K562 (cell line): ENCODE measurements at regions of chr9 and their contacts with region 1.

Region 1: DNA sequence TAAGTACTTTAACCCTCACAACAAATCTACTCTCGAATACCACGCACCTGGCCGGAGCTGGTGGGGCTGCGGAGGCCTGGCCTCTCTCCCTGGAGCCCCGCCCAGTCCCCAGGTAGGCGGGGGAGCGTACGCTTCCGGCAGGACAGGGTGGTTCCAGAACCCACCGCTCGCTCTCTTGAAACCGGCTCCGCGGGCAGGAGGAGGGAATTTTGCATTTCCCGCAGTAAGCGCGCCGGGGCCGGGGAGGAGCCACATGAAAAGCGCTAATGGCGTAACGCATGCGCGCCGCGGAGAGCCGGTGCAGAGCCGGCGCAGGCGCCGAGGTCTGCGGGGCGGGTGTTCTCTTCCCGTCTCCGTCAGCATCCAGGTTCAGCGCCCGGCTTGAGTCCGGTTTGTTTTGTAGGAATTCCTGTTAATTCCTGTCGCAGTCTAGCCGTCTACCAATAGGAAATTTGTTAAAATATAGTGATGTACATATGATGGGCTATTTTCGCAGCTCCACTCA is 20.8 kb downstream of the CAVIN4 start:
- DNase-seq: peak; percentile 66 to 84 (median 74)
- ATAC-seq: peak; percentile 89
- H3K4me3 ChIP-seq: peak overlapping the region; percentile 41
- H3K27ac ChIP-seq: no peak overlapping the region
- H3K4me1 ChIP-seq: peaks cover 6% of the 10 kb centered on the region in 2 experiments; a peak in 3 of 5 replicates
- H3K27me3 ChIP-seq: no peaks in the 10 kb centered on the region
- CTCF ChIP-seq: no peak; a peak in 1 of 6 replicates
- EP300 ChIP-seq: no peak
- POLR2A ChIP-seq: peak; percentile 47; the same call in 1 of the 2 replicates
- RAD21 ChIP-seq: no peak

Region 2: GRCh38 chr9:99266255-99267023 is 1332.3 kb before region 1 on chr9:
- CTCF ChIA-PET with region 1: no interaction called
- POLR2A ChIA-PET with region 1: no interaction called
- in situ Hi-C with region 1: no loop called
- intact Hi-C with region 1: loop called (anchors 10 kb)
- DNase-seq: peak; percentile 61 to 84 (median 73)
- ATAC-seq: peak; percentile 95
- H3K4me3 ChIP-seq: no peak overlapping the region
- H3K27ac ChIP-seq: no peak overlapping the region
- H3K4me1 ChIP-seq: peaks cover 3 to 4% of the 10 kb centered on the region in 2 experiments; a peak in 3 of 5 replicates
- H3K27me3 ChIP-seq: peaks cover 4 to 10% of the 10 kb centered on the region in 2 experiments; a peak in 3 of 5 replicates
- CTCF ChIP-seq: peak; percentile 92 to 96 (median 93)
- EP300 ChIP-seq: no peak
- POLR2A ChIP-seq: no peak
- RAD21 ChIP-seq: peak; percentile 89 to 90

Region 3: DNA sequence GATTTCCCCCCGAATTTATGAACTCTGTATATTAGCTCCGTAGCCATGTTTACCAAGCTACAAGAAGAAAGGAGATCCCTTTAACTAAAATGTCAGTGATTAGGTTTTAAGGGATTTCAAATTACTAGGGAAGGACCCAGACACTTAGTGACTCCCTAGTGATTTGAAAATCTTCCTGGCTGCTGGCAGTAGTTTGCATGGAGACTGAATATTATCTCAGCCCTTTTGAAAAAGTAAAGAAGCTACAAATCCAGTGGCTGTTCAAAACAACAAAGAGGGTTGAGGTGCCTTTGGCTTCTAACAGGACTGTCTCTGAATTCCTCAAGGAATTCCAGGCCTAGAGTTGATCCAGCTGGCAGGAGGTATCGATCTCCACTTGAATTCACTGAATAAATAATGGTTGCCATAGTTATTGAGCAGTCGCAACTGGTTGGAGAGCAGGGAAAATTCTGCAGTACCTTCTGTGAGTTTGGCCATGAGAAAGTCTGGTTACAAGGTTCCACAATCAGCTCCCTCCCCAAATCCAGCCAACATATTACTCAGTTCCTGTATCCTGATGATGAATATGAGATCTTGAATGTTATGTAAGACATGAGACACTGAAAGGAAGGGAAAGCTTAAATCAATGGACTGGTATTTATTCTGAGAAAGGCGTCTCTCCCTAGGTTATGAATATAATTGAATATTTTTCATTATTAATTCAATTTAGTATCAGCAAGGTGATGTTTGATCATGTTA is 739.3 kb before region 1 on chr9:
- CTCF ChIA-PET with region 1: no interaction called
- POLR2A ChIA-PET with region 1: no interaction called
- in situ Hi-C with region 1: no loop called
- intact Hi-C with region 1: no loop called
- DNase-seq: no peak
- ATAC-seq: no peak
- H3K4me3 ChIP-seq: no peak overlapping the region
- H3K27ac ChIP-seq: no peak overlapping the region
- H3K4me1 ChIP-seq: no peaks in the 10 kb centered on the region; a peak in 1 of 5 replicates
- H3K27me3 ChIP-seq: peaks cover 5 to 7% of the 10 kb centered on the region in 2 experiments; a peak in 3 of 5 replicates
- CTCF ChIP-seq: no peak
- EP300 ChIP-seq: no peak
- POLR2A ChIP-seq: no peak
- RAD21 ChIP-seq: no peak

Region 4: DNA sequence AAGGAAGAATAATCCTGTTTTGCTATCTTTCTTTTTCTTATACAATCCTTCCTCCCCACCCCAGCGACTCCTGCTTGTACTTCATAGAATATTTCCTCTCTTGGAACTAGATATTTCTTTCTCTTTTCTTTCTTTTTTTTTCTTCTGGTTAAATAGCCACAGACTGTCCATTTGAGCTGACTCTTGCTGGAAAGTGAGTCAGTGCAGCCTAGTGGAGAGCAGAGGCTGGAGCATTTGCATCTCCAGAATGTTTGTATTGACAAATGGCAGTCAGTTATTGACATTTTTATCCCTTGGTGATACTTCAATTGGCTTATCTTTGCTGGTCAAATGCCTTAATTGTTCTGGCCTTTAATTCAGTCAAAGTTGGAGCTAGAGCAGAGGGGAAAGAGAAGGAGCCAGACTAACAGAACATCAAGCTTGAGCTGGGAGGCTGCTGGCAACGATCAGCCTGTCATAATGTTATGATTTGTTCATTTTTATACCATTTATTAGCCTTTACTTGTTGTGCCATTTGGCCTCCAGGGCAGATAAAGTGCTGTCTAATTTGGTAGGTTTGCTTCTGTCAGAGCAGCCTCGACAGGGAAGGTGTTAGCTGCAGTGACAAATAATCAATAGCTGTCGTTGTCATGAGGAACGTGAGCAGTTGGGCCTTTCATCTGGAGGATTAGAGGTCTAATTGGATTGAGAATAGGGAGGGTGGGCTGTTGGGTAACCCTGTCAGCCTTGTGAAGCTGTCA is 430.6 kb before region 1 on chr9:
- CTCF ChIA-PET with region 1: no interaction called
- POLR2A ChIA-PET with region 1: no interaction called
- in situ Hi-C with region 1: no loop called
- intact Hi-C with region 1: no loop called
- DNase-seq: no peak
- ATAC-seq: no peak
- H3K4me3 ChIP-seq: no peak overlapping the region
- H3K27ac ChIP-seq: no peak overlapping the region
- H3K4me1 ChIP-seq: no peaks in the 10 kb centered on the region
- H3K27me3 ChIP-seq: no peaks in the 10 kb centered on the region
- CTCF ChIP-seq: no peak
- EP300 ChIP-seq: no peak
- POLR2A ChIP-seq: no peak
- RAD21 ChIP-seq: no peak

Region 5: DNA sequence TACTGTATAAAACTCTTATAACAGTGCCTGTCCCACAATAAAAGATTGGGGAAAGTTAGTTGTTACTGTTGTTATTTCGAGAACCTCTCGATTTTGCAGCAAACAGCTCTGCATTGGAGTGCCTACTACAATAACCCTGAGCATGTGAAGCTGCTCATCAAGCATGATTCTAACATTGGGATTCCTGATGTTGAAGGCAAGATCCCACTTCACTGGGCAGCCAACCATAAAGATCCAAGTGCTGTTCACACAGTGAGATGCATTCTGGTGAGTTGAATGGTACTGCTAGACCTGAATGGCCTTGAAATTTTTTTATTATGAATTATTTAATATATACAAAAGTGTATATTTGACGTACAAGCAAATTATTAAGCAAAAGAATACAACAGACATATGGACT is 369.1 kb before region 1 on chr9:
- CTCF ChIA-PET with region 1: interaction called, 5 read pairs
- POLR2A ChIA-PET with region 1: no interaction called
- in situ Hi-C with region 1: no loop called
- intact Hi-C with region 1: loop called (anchors 5 kb)
- DNase-seq: no peak
- ATAC-seq: no peak
- H3K4me3 ChIP-seq: no peak overlapping the region
- H3K27ac ChIP-seq: no peak overlapping the region
- H3K4me1 ChIP-seq: no peaks in the 10 kb centered on the region
- H3K27me3 ChIP-seq: no peaks in the 10 kb centered on the region
- CTCF ChIP-seq: no peak
- EP300 ChIP-seq: no peak
- POLR2A ChIP-seq: no peak
- RAD21 ChIP-seq: no peak

Region 6: DNA sequence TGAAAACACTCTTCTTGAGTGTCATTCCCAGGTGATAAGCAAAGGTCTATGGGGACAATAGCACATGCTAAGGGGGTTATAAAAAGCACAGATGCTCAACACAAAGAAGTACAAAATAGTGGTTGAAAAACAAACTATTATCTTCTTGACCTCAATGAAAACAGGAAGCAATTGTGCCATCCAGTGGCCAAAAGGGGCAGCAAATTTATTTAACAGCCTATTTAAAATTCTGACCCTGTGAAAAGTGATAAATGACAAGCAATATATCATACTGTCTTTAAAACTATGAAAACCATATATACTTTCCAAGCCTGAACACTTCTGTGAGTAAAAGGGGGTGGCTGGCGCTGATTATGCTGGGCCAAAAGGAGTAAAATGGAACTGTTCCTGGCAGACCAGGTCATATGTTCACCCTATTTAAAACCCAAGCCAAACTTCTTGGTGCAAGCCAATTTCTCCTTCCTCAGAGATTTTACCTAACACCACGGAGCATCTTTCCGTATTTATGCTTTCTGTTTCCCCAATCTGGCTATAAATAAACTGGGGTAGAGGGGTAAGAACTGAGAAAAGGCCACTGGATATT is 275.6 kb before region 1 on chr9:
- CTCF ChIA-PET with region 1: no interaction called
- POLR2A ChIA-PET with region 1: interaction called, 4 read pairs
- in situ Hi-C with region 1: loop called (anchors 25 kb)
- intact Hi-C with region 1: loop called (anchors 2 kb)
- DNase-seq: peak; percentile 19 to 57 (median 25)
- ATAC-seq: peak; percentile 72
- H3K4me3 ChIP-seq: no peak overlapping the region
- H3K27ac ChIP-seq: no peak overlapping the region
- H3K4me1 ChIP-seq: no peaks in the 10 kb centered on the region
- H3K27me3 ChIP-seq: no peaks in the 10 kb centered on the region
- CTCF ChIP-seq: peak; percentile 47 to 76 (median 67); a peak in 5 of 6 replicates
- EP300 ChIP-seq: no peak
- POLR2A ChIP-seq: no peak
- RAD21 ChIP-seq: peak; percentile 25 to 61

Region 7: GRCh38 chr9:100505564-100506159 is 93.0 kb before region 1 on chr9:
- CTCF ChIA-PET with region 1: interaction called, 11 read pairs
- POLR2A ChIA-PET with region 1: interaction called, 4 read pairs
- in situ Hi-C with region 1: no loop called
- intact Hi-C with region 1: loop called (anchors 1 kb)
- DNase-seq: peak; percentile 39 to 86 (median 54)
- ATAC-seq: peak; percentile 90
- H3K4me3 ChIP-seq: no peak overlapping the region
- H3K27ac ChIP-seq: no peak overlapping the region
- H3K4me1 ChIP-seq: no peaks in the 10 kb centered on the region
- H3K27me3 ChIP-seq: no peaks in the 10 kb centered on the region
- CTCF ChIP-seq: peak; percentile 75 to 91 (median 83)
- EP300 ChIP-seq: no peak
- POLR2A ChIP-seq: no peak
- RAD21 ChIP-seq: peak; percentile 64 to 77

Region 8: GRCh38 chr9:100587375-100587774 is 11.3 kb before region 1 on chr9:
- CTCF ChIA-PET with region 1: no interaction called
- POLR2A ChIA-PET with region 1: no interaction called
- in situ Hi-C with region 1: no loop called
- intact Hi-C with region 1: no loop called
- DNase-seq: no peak
- ATAC-seq: no peak
- H3K4me3 ChIP-seq: no peak overlapping the region
- H3K27ac ChIP-seq: no peak overlapping the region
- H3K4me1 ChIP-seq: no peaks in the 10 kb centered on the region
- H3K27me3 ChIP-seq: peaks cover 5 to 25% of the 10 kb centered on the region in 2 experiments; a peak in 3 of 5 replicates
- CTCF ChIP-seq: no peak
- EP300 ChIP-seq: no peak
- POLR2A ChIP-seq: no peak
- RAD21 ChIP-seq: no peak

Region 9: GRCh38 chr9:100794738-100795269 is 196.1 kb after region 1 on chr9:
- CTCF ChIA-PET with region 1: no interaction called
- POLR2A ChIA-PET with region 1: no interaction called
- in situ Hi-C with region 1: no loop called
- intact Hi-C with region 1: no loop called
- DNase-seq: no peak
- ATAC-seq: no peak
- H3K4me3 ChIP-seq: no peak overlapping the region
- H3K27ac ChIP-seq: no peak overlapping the region
- H3K4me1 ChIP-seq: no peaks in the 10 kb centered on the region
- H3K27me3 ChIP-seq: no peaks in the 10 kb centered on the region
- CTCF ChIP-seq: no peak
- EP300 ChIP-seq: no peak
- POLR2A ChIP-seq: no peak
- RAD21 ChIP-seq: no peak

Region 10: DNA sequence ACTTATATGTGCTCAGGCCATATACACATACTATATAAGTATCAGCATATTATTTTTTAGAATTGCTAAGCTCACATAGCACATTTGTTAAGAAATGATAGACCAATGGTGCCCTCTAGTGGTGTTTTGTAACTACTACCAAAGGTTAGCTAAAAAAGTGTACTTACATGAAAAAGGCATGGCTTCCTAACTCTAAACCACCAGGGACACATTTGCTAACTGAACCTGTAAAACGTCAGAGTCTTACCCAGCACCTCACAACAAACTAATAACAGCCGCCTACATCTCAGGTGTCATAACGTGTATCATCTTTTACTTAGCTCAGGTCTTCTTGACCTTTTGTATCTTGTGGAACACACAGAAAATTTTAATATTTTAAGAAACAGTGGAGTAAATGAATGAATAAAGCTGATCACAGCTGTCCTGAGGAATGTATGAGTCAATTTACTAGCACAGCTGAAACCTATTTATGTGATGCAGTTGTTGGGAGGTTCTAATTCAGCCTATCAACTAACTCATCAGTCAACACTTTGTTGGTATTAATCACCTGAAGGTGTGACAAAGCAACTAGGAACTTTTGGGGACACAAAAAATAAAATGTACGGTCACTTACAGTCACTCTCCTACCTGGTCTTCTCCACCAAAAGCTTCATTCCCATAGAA is 713.2 kb after region 1 on chr9:
- CTCF ChIA-PET with region 1: interaction called, 19 read pairs
- POLR2A ChIA-PET with region 1: interaction called, 4 read pairs
- in situ Hi-C with region 1: loop called (anchors 10 kb)
- intact Hi-C with region 1: loop called (anchors 1 kb)
- DNase-seq: peak; percentile 56 to 85 (median 60)
- ATAC-seq: peak; percentile 96
- H3K4me3 ChIP-seq: no peak overlapping the region
- H3K27ac ChIP-seq: no peak overlapping the region
- H3K4me1 ChIP-seq: no peaks in the 10 kb centered on the region
- H3K27me3 ChIP-seq: peaks cover 0 to 10% of the 10 kb centered on the region in 2 experiments; a peak in 3 of 5 replicates
- CTCF ChIP-seq: peak; percentile 51 to 81 (median 59); a peak in 5 of 6 replicates
- EP300 ChIP-seq: no peak
- POLR2A ChIP-seq: no peak
- RAD21 ChIP-seq: peak; percentile 79 to 89